SK-N-SH (cell line): ENCODE measurements at regions of chr20 and their contacts with region 1.

Region 1: DNA sequence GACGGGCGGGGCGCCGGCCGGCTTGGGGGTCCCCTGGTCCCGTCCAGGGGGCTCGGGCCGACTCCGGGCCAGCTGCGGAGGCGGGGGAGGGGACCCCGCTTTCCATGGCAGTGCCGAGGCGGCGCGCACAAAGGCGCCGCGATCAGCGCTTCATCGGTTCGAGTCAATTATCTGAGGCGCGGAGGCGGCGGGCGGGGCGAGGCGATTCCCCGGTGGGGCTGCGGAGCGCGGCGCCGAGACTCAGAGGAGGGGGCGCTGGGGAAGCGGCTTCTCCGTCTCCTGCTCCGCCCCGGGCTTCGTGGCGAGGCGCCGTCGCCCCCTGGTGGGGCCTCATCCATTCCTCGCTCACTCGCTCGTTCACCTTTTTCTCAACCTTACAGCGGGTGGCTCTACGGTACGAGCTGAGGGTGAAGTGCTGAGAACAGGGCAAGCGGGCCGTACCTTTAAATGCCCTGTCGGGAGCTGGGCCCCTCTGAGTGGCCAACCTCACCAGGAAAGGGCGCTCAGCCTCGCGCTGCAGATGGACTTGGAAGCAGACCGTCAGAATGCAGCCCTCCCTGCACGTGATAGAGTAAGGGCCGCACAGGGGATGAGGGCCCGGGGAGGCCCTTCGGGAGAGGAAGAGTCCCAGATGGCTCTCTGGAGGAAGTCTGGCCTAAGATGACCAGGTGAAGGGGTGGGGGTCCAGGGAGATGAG is 39.9 kb downstream of the SLC52A3 start:
- DNase-seq: peak; percentile 95
- H3K4me3 ChIP-seq: peak overlapping the region; percentile 52 to 60
- H3K27ac ChIP-seq: no peak overlapping the region; a peak in 1 of 4 replicates
- H3K4me1 ChIP-seq: no peaks in the 10 kb centered on the region; a peak in 1 of 4 replicates
- H3K27me3 ChIP-seq: peaks cover 14% of the 10 kb centered on the region; the same call in 1 of the 2 replicates
- CTCF ChIP-seq: peak; percentile 62
- EP300 ChIP-seq: no peak
- RAD21 ChIP-seq: peak; percentile 89

Region 2: GRCh38 chr20:561437-562231 is 166.8 kb before region 1 on chr20:
- CTCF ChIA-PET with region 1: interaction called, 35 read pairs
- POLR2A ChIA-PET with region 1: no interaction called
- DNase-seq: peak; percentile 83
- H3K4me3 ChIP-seq: no peak overlapping the region; a peak in 1 of 4 replicates
- H3K27ac ChIP-seq: no peak overlapping the region
- H3K4me1 ChIP-seq: no peaks in the 10 kb centered on the region
- H3K27me3 ChIP-seq: peaks cover 13% of the 10 kb centered on the region
- CTCF ChIP-seq: peak; percentile 94
- EP300 ChIP-seq: no peak
- RAD21 ChIP-seq: peak; percentile 95

Region 3: DNA sequence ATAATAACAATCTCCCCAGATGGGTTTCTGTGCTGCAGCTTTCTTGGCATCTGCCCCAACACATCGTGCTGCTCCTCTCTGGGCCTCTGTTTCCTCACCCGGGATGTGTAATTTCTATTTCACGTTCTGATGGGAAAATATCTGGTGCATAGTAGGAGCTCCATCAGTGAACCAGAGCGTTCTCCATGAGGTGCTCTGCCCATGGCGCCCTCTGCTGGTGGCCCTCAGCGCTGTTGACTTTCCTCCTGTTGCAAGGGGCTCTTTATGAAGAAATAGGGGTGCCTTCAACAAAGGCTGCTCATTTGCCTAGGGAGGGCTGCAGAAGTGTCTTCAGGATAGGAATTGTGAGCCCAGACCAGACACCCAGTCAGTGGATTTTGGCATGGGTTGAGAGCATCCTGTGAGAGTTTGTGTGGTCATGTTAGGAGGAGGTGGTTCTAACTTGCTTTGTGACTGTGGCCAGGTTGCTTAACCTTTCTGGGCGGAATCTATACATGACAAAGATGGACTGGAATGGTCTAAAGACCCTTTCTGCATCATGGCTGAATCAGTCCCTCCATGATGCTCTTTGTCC is 60.9 kb before region 1 on chr20:
- CTCF ChIA-PET with region 1: interaction called, 76 read pairs
- POLR2A ChIA-PET with region 1: no interaction called
- DNase-seq: peak; percentile 79
- H3K4me3 ChIP-seq: peak overlapping the region in 1 of 2 experiments; percentile 17; a peak in 1 of 4 replicates
- H3K27ac ChIP-seq: no peak overlapping the region
- H3K4me1 ChIP-seq: no peaks in the 10 kb centered on the region; a peak in 1 of 4 replicates
- H3K27me3 ChIP-seq: no peaks in the 10 kb centered on the region
- CTCF ChIP-seq: peak; percentile 86
- EP300 ChIP-seq: no peak
- RAD21 ChIP-seq: peak; percentile 56

Region 4: DNA sequence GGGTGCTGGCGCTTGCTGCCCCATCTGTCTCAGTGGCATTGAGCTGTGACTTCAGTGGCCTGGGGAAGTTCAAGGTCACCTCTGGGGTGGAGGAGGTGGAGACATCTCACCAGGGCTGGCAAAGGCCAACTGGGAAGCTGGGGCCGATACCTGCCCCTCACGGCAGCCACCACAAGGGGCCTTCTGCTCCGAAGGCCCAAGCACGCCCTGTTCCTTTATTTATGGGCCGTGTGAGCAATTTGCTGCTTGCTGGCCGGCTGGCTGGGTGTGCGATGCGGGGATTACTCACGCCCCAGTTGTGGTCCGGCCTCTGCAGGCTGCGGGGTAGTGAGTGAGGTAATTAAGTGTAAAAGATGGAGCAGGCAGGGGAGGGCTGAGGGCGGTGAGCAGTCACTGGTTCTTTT is 39.6 kb before region 1 on chr20:
- CTCF ChIA-PET with region 1: interaction called, 20 read pairs
- POLR2A ChIA-PET with region 1: interaction called, 3 read pairs
- DNase-seq: peak; percentile 54
- H3K4me3 ChIP-seq: no peak overlapping the region
- H3K27ac ChIP-seq: no peak overlapping the region
- H3K4me1 ChIP-seq: no peaks in the 10 kb centered on the region; a peak in 1 of 4 replicates
- H3K27me3 ChIP-seq: no peaks in the 10 kb centered on the region; the same call in 1 of the 2 replicates
- CTCF ChIP-seq: no peak
- EP300 ChIP-seq: no peak
- RAD21 ChIP-seq: no peak

Region 5: DNA sequence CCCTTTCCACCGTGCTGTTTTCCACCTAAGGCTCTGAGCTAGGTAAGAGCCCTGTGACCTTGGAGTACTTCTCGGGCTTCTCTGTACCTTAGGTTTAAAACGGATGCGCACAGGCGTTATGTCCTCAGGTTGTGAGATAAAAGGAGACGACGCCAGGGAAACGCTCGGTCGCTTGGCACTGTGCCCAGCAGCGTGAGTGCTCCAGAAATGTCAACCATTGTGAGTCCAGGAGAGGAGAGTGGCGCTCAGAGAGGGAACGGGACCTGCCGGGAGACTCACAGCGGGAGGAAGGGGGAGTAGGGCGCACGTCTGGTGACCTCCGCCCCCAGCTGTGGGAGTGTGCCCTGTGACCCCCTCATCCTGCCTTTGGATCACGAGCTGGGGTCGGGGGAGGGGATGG is 19.0 kb before region 1 on chr20:
- CTCF ChIA-PET with region 1: interaction called, 29 read pairs
- POLR2A ChIA-PET with region 1: no interaction called
- DNase-seq: peak; percentile 71
- H3K4me3 ChIP-seq: peak overlapping the region in 1 of 2 experiments; percentile 34; a peak in 1 of 4 replicates
- H3K27ac ChIP-seq: no peak overlapping the region; a peak in 1 of 4 replicates
- H3K4me1 ChIP-seq: peaks cover 0 to 7% of the 10 kb centered on the region in 2 experiments; a peak in 1 of 4 replicates
- H3K27me3 ChIP-seq: peaks cover 8% of the 10 kb centered on the region; the same call in 1 of the 2 replicates
- CTCF ChIP-seq: no peak
- EP300 ChIP-seq: no peak
- RAD21 ChIP-seq: no peak

Region 6: DNA sequence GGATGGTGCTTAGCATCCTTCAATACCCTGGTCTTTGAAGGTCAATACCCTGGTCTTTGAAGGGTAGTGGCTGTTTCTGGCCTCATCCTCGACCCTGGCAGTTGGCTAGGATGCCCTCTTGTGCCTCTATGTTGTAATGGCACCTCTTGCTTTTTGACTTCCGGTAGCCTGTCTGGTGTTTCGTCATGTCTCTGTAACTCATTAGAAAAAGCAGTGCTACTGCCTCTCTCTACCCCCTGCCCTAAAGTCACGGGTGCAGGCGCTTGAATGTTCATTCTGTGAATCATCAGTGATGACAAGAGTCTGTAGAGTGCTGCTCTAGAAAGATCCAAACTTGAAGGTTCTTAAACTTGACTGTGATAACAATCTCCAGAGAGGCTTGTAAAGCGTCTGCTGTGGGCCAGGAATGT is 245.4 kb after region 1 on chr20:
- CTCF ChIA-PET with region 1: no interaction called
- POLR2A ChIA-PET with region 1: no interaction called
- DNase-seq: peak; percentile 55
- H3K4me3 ChIP-seq: no peak overlapping the region
- H3K27ac ChIP-seq: no peak overlapping the region
- H3K4me1 ChIP-seq: peaks cover 0 to 10% of the 10 kb centered on the region in 2 experiments; a peak in 1 of 4 replicates
- H3K27me3 ChIP-seq: peaks cover 5% of the 10 kb centered on the region; the same call in 1 of the 2 replicates
- CTCF ChIP-seq: peak; percentile 45
- EP300 ChIP-seq: no peak
- RAD21 ChIP-seq: peak; percentile 50